ENCODE measurements at regions of chr6 and their contacts with region 1.

Region 1: GRCh38 chr6:35048631-35049083 is 92.5 kb downstream of the TCP11 start:
- DNase-seq: peak; percentile 94
- ATAC-seq: peak; percentile 34
- H3K4me3 ChIP-seq: no peak overlapping the region
- H3K27ac ChIP-seq: peak overlapping the region; percentile 79; the same call in 1 of the 2 replicates
- H3K4me1 ChIP-seq: peaks cover 41% of the 10 kb centered on the region
- H3K27me3 ChIP-seq: no peaks in the 10 kb centered on the region
- CTCF ChIP-seq: peak; percentile 21; the same call in 1 of the 2 replicates
- POLR2A ChIP-seq: no peak
- RAD21 ChIP-seq: no peak

Region 2: GRCh38 chr6:35016502-35017321 is 31.9 kb before region 1 on chr6:
- CTCF ChIA-PET with region 1: no interaction called
- POLR2A ChIA-PET with region 1: no interaction called
- dilution Hi-C with region 1: no loop called
- in situ Hi-C with region 1: no loop called
- intact Hi-C with region 1: loop called (anchors 5 kb)
- DNase-seq: peak; percentile 88
- ATAC-seq: peak; percentile 76
- H3K4me3 ChIP-seq: peak overlapping the region; percentile 4; the same call in 1 of the 2 replicates
- H3K27ac ChIP-seq: peak overlapping the region; percentile 91
- H3K4me1 ChIP-seq: peaks cover 27% of the 10 kb centered on the region
- H3K27me3 ChIP-seq: no peaks in the 10 kb centered on the region
- CTCF ChIP-seq: no peak
- POLR2A ChIP-seq: no peak
- RAD21 ChIP-seq: no peak

Region 3: DNA sequence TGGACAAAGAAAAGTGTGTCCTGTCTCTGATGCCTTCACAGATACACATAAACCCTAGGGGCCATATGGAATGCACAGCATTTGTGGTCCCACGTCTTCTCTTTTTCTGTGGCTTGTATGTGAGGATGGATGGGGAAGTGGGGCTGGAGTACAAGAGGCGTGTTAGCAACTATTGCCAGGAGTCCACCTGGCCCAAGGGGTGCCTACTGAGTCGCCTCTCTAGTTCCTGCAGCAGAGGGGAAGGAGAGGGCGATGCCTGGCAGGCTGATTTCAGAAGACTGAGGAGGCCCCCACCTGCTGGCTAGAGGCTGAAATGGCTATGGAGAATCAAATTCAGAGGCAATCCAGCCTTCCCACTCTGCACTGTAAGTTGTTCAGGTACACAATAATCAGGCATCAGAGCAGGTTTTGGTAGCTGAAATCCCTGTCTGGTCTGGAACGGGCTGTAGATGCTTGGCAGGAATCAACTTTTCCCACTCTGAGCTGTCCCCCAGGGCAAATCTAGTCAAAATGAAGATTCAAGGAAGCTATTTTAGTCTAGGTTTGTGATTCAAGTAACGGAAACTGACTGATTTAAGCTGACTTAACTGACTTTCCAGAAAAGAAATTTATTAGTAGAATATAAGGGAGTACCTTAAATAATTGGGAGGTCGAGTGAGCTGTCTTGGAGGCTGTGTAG is 278.8 kb after region 1 on chr6:
- CTCF ChIA-PET with region 1: no interaction called
- POLR2A ChIA-PET with region 1: no interaction called
- dilution Hi-C with region 1: no loop called
- in situ Hi-C with region 1: no loop called
- intact Hi-C with region 1: no loop called
- DNase-seq: peak; percentile 55
- ATAC-seq: peak; percentile 96
- H3K4me3 ChIP-seq: no peak overlapping the region
- H3K27ac ChIP-seq: no peak overlapping the region
- H3K4me1 ChIP-seq: no peaks in the 10 kb centered on the region
- H3K27me3 ChIP-seq: no peaks in the 10 kb centered on the region; the same call in 1 of the 2 replicates
- CTCF ChIP-seq: peak; percentile 67
- POLR2A ChIP-seq: no peak
- RAD21 ChIP-seq: peak; percentile 66

Measured in IMR-90 (cell line).